ENCODE measurements at regions of chr5 and their contacts with region 1.

Region 1: GRCh38 chr5:59496524-59497134 is 396.9 kb downstream of the PDE4D start:
- DNase-seq: peak; percentile 66
- H3K4me3 Mint-ChIP-seq: no peak overlapping the region
- H3K27ac Mint-ChIP-seq: peak overlapping the region; percentile 18
- H3K4me1 Mint-ChIP-seq: no peaks in the 10 kb centered on the region
- H3K27me3 Mint-ChIP-seq: peaks cover 29% of the 10 kb centered on the region

Region 2: GRCh38 chr5:59062986-59063683 is 433.5 kb before region 1 on chr5:
- intact Hi-C with region 1: no loop called
- DNase-seq: no peak
- H3K4me3 Mint-ChIP-seq: no peak overlapping the region
- H3K27ac Mint-ChIP-seq: no peak overlapping the region
- H3K4me1 Mint-ChIP-seq: peaks cover 4% of the 10 kb centered on the region
- H3K27me3 Mint-ChIP-seq: peaks cover 10% of the 10 kb centered on the region

Region 3: GRCh38 chr5:59390074-59390659 is 106.5 kb before region 1 on chr5:
- intact Hi-C with region 1: loop called (anchors 2 kb)
- DNase-seq: peak; percentile 65
- H3K4me3 Mint-ChIP-seq: no peak overlapping the region
- H3K27ac Mint-ChIP-seq: no peak overlapping the region
- H3K4me1 Mint-ChIP-seq: no peaks in the 10 kb centered on the region
- H3K27me3 Mint-ChIP-seq: peaks cover 16% of the 10 kb centered on the region

Region 4: DNA sequence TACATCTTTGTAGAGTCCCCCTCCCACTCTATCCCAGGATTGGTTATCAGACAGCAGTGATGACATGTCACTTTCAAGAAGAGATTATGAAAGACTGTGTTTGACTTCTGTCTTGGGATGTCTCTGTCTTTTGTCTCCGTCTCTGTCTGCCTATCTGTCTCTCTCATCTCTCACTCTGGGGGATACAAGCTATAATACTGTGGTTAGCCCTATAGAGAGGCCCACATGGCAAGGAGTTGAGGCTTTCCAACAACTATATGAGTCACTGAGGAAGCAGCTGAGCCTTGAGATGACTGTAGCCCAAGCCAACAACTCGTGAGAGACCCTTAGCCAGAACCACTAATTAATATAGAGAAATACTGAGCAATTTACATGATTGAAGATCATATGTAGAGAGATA is 112.1 kb after region 1 on chr5:
- intact Hi-C with region 1: no loop called
- DNase-seq: peak; percentile 58
- H3K4me3 Mint-ChIP-seq: peak overlapping the region; percentile 1
- H3K27ac Mint-ChIP-seq: peak overlapping the region; percentile 23
- H3K4me1 Mint-ChIP-seq: peaks cover 15% of the 10 kb centered on the region
- H3K27me3 Mint-ChIP-seq: peaks cover 19% of the 10 kb centered on the region